ENCODE measurements at regions of chr7 and their contacts with region 1.

Region 1: GRCh38 chr7:75994388-75995051 is at the start of gene TMEM120A:
- DNase-seq: peak; percentile 99
- ATAC-seq: peak; percentile 92 to 95
- total RNA-seq, gene TMEM120A: 63.5 to 98.3 TPM

Region 2: DNA sequence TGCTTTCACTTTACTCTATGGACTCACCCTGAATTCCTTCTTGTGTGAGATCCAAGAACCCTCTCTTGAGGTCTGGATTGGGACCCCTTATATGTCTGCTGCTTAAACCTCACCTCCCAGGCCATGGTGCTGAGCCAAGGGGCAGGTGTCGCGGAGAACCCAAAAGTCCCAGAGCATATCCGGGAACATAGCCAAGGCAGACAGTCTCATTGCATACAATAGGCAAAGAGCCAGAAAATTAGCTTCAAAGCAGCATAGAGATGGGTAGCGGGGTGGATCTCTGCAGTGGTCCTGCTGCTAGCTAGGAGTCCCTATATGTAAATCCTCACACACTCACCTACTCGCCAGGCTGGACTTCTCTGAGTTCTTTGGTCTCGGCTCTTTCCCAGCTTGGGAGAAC is 186.4 kb before region 1 on chr7:
- intact Hi-C with region 1: no loop called
- DNase-seq: no peak
- ATAC-seq: no peak

Region 3: DNA sequence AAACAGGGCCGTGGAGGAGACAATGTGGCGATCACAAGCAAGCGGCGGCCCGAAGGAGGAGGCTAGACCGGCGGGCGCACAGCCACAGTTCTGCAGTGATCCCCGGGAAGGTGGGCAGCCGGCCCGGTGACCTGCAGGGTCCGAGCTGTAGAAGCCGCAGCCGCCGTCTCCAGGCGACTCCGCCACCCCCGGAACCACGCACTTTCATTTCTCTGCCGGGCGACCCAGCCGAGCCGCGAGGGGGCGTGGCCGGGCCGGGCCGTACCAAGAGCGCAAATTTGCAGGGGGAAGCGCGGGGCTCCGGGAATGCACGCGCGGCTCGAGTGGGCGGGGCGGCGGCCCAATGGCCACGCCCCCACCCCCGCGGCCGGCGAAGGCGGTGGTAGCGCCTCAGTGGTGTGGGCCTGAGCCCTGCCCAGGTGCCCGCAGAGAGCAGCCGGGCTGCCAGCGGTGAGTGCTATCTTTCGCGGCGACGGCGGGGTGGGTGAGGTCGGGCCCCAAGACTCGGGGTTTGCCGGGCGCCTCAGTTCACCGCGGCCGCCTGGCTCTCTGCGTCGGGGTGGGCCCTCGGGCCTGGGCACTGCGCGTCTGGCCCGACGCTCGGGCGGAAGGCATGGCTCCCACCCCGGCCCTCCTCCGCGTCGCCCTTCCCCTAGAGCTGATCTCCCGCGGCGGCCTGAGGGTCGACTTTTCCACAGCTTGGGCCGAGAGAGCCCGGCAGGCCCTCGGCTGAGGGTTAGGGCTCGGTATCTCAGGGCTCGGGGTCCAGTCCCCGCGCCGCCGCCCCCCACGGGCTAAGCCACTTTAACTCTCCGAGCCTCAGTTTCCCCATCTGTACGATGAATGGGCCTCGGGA is 79.6 kb before region 1 on chr7 and contains the start of gene POR:
- intact Hi-C with region 1: loop called (anchors 2 to 10 kb)
- DNase-seq: peak; percentile 94
- ATAC-seq: peak; percentile 100
- total RNA-seq, gene POR: 60.6 to 128 TPM

Region 4: GRCh38 chr7:75925717-75926435 is 68.6 kb before region 1 on chr7:
- intact Hi-C with region 1: no loop called
- DNase-seq: no peak
- ATAC-seq: peak; percentile 51 to 82

Region 5: DNA sequence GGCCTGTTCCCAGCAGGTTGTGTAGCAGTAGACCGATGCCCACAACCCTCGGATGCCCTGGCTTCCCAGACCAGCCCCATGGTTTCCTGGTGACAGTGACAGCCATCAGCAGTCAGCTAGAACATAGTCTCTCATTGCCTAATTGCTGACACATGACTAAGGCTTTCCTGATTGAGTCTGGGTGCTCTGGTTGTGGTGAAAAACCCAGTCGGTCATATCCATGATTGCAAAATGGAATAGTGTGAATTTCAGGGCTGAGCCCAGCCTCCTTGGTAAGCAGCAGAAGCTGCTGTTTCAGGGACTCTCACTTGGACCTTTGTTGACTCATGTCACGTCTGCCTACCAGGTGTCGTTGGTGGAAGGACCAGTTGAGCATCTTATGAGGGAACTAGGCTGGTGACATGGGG is 43.0 kb before region 1 on chr7:
- intact Hi-C with region 1: loop called in 1 of 2 experiments (anchors 2 kb)
- DNase-seq: peak; percentile 61
- ATAC-seq: peak; percentile 75 to 78

Measured in left cardiac atrium (tissue), 4 donors.